CD14-positive monocyte (primary cell): ENCODE measurements at regions of chr5 and their contacts with region 1.

Region 1: GRCh38 chr5:10249948-10250803 is at the start of gene CCT5:
- DNase-seq: peak; percentile 97 to 99 (median 98)
- H3K4me3 ChIP-seq: peak within 1 kb of the TSS; percentile 88 to 92 (median 89)
- H3K4me3 Mint-ChIP-seq: peak within 1 kb of the TSS; percentile 91 to 96
- H3K27ac ChIP-seq: peak within 1 kb of the TSS; percentile 85 to 99
- H3K27ac Mint-ChIP-seq: peak within 1 kb of the TSS; percentile 96 to 100 (median 99)
- H3K4me1 ChIP-seq: peaks cover 24 to 33% of the 10 kb centered on the region in 2 donors
- H3K4me1 Mint-ChIP-seq: peaks cover 29% of the 10 kb centered on the region
- H3K27me3 ChIP-seq: no peaks in the 10 kb centered on the region
- H3K27me3 Mint-ChIP-seq: peaks cover 0 to 5% (median 1%) of the 10 kb centered on the region in 3 donors
- CTCF ChIP-seq: no peak
- polyA plus RNA-seq, gene CCT5: 142 to 236 (median 229) TPM

Region 2: GRCh38 chr5:10424124-10424731 is 174.1 kb after region 1 on chr5:
- intact Hi-C with region 1: loop called in 1 of 2 experiments (anchors 10 kb)
- DNase-seq: peak; percentile 34 to 50 (median 46)
- H3K4me3 ChIP-seq: no peak overlapping the region
- H3K4me3 Mint-ChIP-seq: no peak overlapping the region
- H3K27ac ChIP-seq: no peak overlapping the region
- H3K27ac Mint-ChIP-seq: peak overlapping the region in 2 of 7 donors; percentile 46 to 52
- H3K4me1 ChIP-seq: peaks cover 33 to 38% of the 10 kb centered on the region in 2 donors
- H3K4me1 Mint-ChIP-seq: peaks cover 40% of the 10 kb centered on the region
- H3K27me3 ChIP-seq: no peaks in the 10 kb centered on the region
- H3K27me3 Mint-ChIP-seq: no peaks in the 10 kb centered on the region
- CTCF ChIP-seq: peak; percentile 64